ENCODE measurements at regions of chr1 and their contacts with region 1.

Region 1: DNA sequence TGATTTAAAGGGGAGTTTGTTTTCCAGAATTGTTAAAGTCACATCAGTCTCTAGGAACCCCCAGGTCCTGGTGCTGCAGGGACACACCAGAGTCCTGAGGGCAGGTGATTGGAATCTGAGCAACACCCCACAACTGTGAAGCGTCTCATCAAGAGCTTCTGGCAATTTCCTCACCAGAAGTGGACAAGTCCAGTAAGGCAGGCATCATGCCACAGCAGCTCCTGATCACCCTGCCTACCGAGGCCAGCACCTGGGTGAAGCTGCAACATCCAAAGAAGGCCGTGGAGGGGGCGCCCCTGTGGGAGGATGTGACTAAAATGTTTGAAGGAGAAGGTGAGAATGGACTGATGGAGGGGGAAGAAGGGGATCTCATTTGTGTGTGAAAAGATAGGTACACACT is 2.1 kb downstream of the ZFP69 start:
- DNase-seq: no peak
- ATAC-seq: no peak
- H3K4me3 ChIP-seq: no peak overlapping the region
- H3K27ac ChIP-seq: no peak overlapping the region
- H3K4me1 ChIP-seq: peaks cover 4% of the 10 kb centered on the region; the same call in 1 of the 2 replicates
- H3K27me3 ChIP-seq: no peaks in the 10 kb centered on the region
- CTCF ChIP-seq: no peak

Region 2: DNA sequence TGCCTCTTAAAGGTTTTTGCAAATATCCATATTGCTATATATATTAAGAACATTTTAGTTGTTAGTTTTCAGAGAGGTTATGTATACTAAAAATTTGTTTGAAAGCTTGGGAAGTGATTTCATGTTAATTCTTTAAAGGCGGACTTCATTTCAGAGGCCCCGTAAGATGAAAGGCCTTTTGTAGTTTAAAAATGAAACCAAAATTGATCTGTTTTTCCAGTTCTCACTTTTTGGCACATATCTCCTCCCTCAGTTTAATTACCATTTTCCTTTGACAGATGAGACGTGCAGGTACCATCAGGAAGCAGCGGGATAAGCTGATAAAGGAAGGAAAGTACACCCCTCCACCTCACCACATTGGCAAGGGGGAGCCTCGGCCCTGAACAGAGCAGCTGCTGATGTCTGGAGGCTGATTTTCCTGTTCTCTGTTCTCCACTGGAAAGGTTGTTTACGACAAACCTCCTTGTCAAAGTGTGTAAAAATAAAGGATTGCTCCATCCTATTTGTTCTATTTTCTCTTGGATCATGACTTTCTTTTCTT is 1445.0 kb before region 1 on chr1:
- CTCF ChIA-PET with region 1: no interaction called
- POLR2A ChIA-PET with region 1: no interaction called
- in situ Hi-C with region 1: no loop called
- intact Hi-C with region 1: no loop called
- DNase-seq: no peak
- ATAC-seq: no peak
- H3K4me3 ChIP-seq: no peak overlapping the region
- H3K27ac ChIP-seq: no peak overlapping the region
- H3K4me1 ChIP-seq: no peaks in the 10 kb centered on the region
- H3K27me3 ChIP-seq: no peaks in the 10 kb centered on the region
- CTCF ChIP-seq: no peak

Region 3: GRCh38 chr1:42035830-42036604 is 1556.9 kb after region 1 on chr1:
- CTCF ChIA-PET with region 1: no interaction called
- POLR2A ChIA-PET with region 1: interaction called, 11 read pairs
- in situ Hi-C with region 1: no loop called
- intact Hi-C with region 1: no loop called
- DNase-seq: peak; percentile 41
- ATAC-seq: peak; percentile 96
- H3K4me3 ChIP-seq: peak overlapping the region; percentile 65 to 84
- H3K27ac ChIP-seq: peak overlapping the region; percentile 85
- H3K4me1 ChIP-seq: peaks cover 10% of the 10 kb centered on the region
- H3K27me3 ChIP-seq: peaks cover 8% of the 10 kb centered on the region
- CTCF ChIP-seq: no peak; the same call in none of the 2 replicates

Measured in Panc1 (cell line).